Calu3 (cell line): ENCODE measurements at regions of chr3 and their contacts with region 1.

Region 1: DNA sequence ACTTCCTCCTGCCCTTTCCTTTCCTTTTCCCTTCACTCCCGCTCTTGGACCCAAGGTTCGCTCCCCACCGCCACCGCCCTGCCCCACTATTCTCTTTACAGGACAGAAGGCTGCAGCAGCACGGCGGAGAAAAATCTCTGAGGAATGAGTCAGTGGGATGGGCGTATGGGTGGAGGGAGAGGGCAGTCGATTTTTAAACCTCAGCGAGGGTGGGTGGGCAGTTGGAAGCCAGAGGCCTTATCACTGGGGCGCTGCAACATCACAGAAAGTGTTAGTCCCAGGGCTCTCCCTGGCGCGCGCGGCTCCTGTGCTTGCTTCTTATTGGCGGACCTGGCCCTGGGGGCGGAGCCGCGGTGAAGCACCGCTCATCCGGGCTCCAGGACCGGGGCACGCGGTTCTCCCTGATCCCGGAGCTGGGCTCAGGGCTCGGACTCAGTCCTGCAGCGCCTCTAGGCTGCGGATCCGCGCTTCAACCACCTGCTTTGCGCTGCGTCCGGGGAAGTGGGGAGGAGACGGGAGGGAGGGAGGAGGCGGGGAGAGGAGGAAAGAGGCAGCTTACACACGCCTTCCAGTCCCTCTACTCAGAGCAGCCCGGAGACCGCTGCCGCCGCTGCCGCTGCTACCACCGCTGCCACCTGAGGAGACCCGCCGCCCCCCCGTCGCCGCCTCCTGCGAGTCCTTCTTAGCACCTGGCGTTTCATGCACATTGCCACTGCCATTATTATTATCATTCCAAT is at the start of gene ALCAM:
- DNase-seq: peak; percentile 97
- H3K4me3 Mint-ChIP-seq: peak within 1 kb of the TSS; percentile 92
- H3K27ac Mint-ChIP-seq: peak within 1 kb of the TSS; percentile 99
- H3K4me1 Mint-ChIP-seq: peaks cover 4% of the 10 kb centered on the region
- H3K27me3 Mint-ChIP-seq: no peaks in the 10 kb centered on the region
- CTCF ChIP-seq: no peak
- total RNA-seq, gene ALCAM: 146 and 166 TPM in 2 replicates

Region 2: GRCh38 chr3:104279617-104280016 is 1086.9 kb before region 1 on chr3:
- CTCF ChIA-PET with region 1: no interaction called
- intact Hi-C with region 1: loop called (anchors 5 kb)
- DNase-seq: no peak
- H3K4me3 Mint-ChIP-seq: peak overlapping the region; percentile 36
- H3K27ac Mint-ChIP-seq: no peak overlapping the region
- H3K4me1 Mint-ChIP-seq: no peaks in the 10 kb centered on the region
- H3K27me3 Mint-ChIP-seq: no peaks in the 10 kb centered on the region
- CTCF ChIP-seq: no peak

Region 3: GRCh38 chr3:104604369-104605010 is 762.0 kb before region 1 on chr3:
- CTCF ChIA-PET with region 1: interaction called, 14 read pairs
- intact Hi-C with region 1: loop called (anchors 2 kb)
- DNase-seq: no peak
- H3K4me3 Mint-ChIP-seq: peak overlapping the region; percentile 24
- H3K27ac Mint-ChIP-seq: peak overlapping the region; percentile 42
- H3K4me1 Mint-ChIP-seq: peaks cover 10% of the 10 kb centered on the region
- H3K27me3 Mint-ChIP-seq: no peaks in the 10 kb centered on the region
- CTCF ChIP-seq: no peak

Region 4: GRCh38 chr3:104952146-104952972 is 414.1 kb before region 1 on chr3:
- CTCF ChIA-PET with region 1: no interaction called
- intact Hi-C with region 1: loop called (anchors 10 kb)
- DNase-seq: peak; percentile 28
- H3K4me3 Mint-ChIP-seq: no peak overlapping the region
- H3K27ac Mint-ChIP-seq: peak overlapping the region; percentile 0
- H3K4me1 Mint-ChIP-seq: peaks cover 18% of the 10 kb centered on the region
- H3K27me3 Mint-ChIP-seq: no peaks in the 10 kb centered on the region
- CTCF ChIP-seq: no peak

Region 5: GRCh38 chr3:105118905-105119304 is 247.6 kb before region 1 on chr3:
- CTCF ChIA-PET with region 1: no interaction called
- intact Hi-C with region 1: loop called (anchors 5 kb)
- DNase-seq: peak; percentile 8
- H3K4me3 Mint-ChIP-seq: no peak overlapping the region
- H3K27ac Mint-ChIP-seq: peak overlapping the region; percentile 77
- H3K4me1 Mint-ChIP-seq: peaks cover 9% of the 10 kb centered on the region
- H3K27me3 Mint-ChIP-seq: no peaks in the 10 kb centered on the region
- CTCF ChIP-seq: no peak

Region 6: GRCh38 chr3:105214575-105214974 is 151.9 kb before region 1 on chr3:
- CTCF ChIA-PET with region 1: no interaction called
- intact Hi-C with region 1: no loop called
- DNase-seq: no peak
- H3K4me3 Mint-ChIP-seq: no peak overlapping the region
- H3K27ac Mint-ChIP-seq: no peak overlapping the region
- H3K4me1 Mint-ChIP-seq: no peaks in the 10 kb centered on the region
- H3K27me3 Mint-ChIP-seq: no peaks in the 10 kb centered on the region
- CTCF ChIP-seq: no peak

Region 7: GRCh38 chr3:105518806-105519418 is 152.4 kb after region 1 on chr3:
- CTCF ChIA-PET with region 1: interaction called, 3 read pairs
- intact Hi-C with region 1: loop called (anchors 1 kb)
- DNase-seq: peak; percentile 35
- H3K4me3 Mint-ChIP-seq: no peak overlapping the region
- H3K27ac Mint-ChIP-seq: no peak overlapping the region
- H3K4me1 Mint-ChIP-seq: peaks cover 8% of the 10 kb centered on the region
- H3K27me3 Mint-ChIP-seq: no peaks in the 10 kb centered on the region
- CTCF ChIP-seq: peak; percentile 28

Region 8: DNA sequence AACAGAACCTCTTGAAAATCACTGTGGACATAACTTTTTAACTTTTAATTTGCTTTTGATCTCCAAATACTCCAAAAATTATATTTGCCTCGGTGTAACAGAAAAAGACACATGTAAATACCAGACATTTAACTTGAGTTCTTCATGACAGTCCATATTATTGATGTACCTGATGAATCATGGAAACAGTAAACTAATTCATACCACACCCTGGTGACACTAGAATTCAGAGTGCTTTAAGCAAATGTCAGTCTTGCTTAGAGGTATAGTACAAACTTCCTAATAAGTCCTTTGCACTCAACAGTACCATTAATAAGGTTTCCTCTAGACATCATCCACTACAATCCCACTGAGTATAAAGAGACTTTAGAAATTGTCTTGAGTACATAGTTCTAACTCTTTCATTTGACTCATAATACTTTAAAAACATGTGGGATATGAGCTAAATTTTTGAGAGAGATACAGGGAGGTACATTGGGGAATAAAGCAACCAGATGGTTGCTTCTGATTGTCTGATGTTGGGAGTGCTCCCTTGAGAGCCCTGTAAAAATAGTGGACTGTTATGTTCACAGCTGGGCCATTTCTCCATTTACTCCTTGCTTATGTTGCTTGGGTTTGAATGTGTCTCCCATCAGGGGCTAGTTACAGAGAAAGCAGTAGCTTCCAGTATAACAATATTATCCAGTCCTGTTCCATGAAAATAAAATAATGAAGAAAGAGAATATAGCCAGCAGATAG is 176.0 kb after region 1 on chr3:
- CTCF ChIA-PET with region 1: no interaction called
- intact Hi-C with region 1: no loop called
- DNase-seq: no peak
- H3K4me3 Mint-ChIP-seq: no peak overlapping the region
- H3K27ac Mint-ChIP-seq: no peak overlapping the region
- H3K4me1 Mint-ChIP-seq: peaks cover 13% of the 10 kb centered on the region
- H3K27me3 Mint-ChIP-seq: no peaks in the 10 kb centered on the region
- CTCF ChIP-seq: no peak